Right cardiac atrium (tissue), 5 donors: ENCODE measurements at regions of chr3 and their contacts with region 1.

Region 1: DNA sequence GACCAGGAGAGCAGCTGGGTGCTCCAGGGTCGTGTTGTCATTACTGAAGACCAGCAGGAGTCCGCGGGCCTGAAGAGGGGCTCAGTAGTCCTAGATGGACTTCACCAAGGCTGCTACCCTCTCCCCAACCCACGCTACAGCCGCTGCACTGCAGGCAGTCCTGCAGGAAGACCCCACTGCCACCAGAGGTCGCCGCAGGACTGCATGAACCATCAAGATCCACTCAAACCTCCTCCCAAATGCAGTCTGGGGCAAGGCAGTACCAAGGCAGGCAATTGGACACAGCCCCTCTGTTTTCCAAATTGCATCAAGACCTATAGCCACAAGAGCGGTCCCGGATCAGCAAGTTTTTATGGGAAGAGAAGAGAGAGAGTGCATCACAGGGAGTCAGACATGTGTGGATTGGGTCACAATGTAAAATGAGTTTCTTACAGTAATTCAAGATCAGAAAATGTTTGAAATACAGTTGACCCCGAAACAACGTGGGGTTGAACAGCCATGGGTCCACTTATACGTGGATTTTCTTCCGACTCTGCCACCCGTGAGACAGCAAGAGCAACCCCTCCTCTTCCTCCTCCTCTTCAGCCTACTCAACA is 46.7 kb downstream of the DZIP1L start:
- DNase-seq: peak; percentile 84 to 89 (median 88)
- ATAC-seq: peak; percentile 90 to 92
- H3K4me3 ChIP-seq: no peak overlapping the region
- H3K27ac ChIP-seq: no peak overlapping the region
- H3K4me1 ChIP-seq: no peaks in the 10 kb centered on the region
- H3K27me3 ChIP-seq: no peaks in the 10 kb centered on the region

Region 2: DNA sequence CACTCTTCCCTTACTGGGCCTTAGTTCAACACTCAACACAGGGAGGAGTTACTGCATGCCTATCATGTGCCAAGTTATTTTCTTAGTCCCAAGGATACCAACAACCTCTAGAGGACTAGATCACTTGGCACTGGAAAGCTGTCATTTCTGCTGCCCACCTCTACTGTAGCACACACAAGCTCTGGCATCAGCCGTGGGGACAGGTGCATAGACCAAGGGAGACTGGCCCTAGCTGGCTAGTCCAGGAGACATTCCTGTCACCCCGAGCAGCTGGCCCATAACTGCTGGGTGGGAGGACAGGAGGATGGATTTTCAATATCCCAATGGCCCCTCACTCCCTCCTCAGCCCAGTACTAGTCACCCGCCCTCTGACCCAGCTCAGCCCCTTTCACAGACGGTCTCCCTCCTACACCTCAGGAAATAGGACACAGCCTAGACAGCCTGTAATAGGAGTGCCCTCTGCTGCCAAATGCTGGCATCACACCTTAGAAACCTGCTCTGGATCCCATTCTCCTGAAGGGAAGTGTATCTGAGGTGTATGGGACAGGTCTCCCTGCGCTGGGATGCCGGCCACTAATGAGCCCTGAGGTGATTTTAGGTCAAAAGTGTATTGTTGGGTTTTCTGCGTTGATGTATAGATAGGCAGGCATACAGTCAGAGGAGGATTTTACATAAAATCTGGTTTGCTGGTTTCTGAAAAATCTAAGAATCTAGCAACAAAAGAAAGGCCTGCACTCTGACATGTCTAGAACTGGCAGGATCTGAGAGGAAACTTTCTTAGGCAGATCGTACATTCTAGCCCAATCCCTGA is 50.1 kb after region 1 on chr3:
- intact Hi-C with region 1: loop called (anchors 2 to 10 kb)
- DNase-seq: peak; percentile 68 to 88 (median 80)
- ATAC-seq: peak; percentile 62 to 67
- H3K4me3 ChIP-seq: no peak overlapping the region
- H3K27ac ChIP-seq: no peak overlapping the region
- H3K4me1 ChIP-seq: peaks cover 6% of the 10 kb centered on the region
- H3K27me3 ChIP-seq: no peaks in the 10 kb centered on the region